GM12878 (cell line): ENCODE measurements at regions of chr6 and their contacts with region 1.

Region 1: GRCh38 chr6:12331956-12332749 is 42.0 kb downstream of the EDN1 start:
- DNase-seq: no peak
- ATAC-seq: no peak
- H3K4me3 ChIP-seq: no peak overlapping the region
- H3K27ac ChIP-seq: no peak overlapping the region
- H3K4me1 ChIP-seq: peaks cover 21% of the 10 kb centered on the region
- H3K27me3 ChIP-seq: no peaks in the 10 kb centered on the region
- CTCF ChIP-seq: no peak
- EP300 ChIP-seq: no peak
- POLR2A ChIP-seq: no peak
- RAD21 ChIP-seq: no peak

Region 2: GRCh38 chr6:12313992-12314805 is 18.0 kb before region 1 on chr6:
- CTCF ChIA-PET with region 1: interaction called, 14 read pairs
- POLR2A ChIA-PET with region 1: interaction called, 7 read pairs
- RAD21 ChIA-PET with region 1: interaction called, 3 read pairs
- SMC1A ChIA-PET with region 1: interaction called, 66 read pairs
- in situ Hi-C with region 1: no loop called
- intact Hi-C with region 1: no loop called
- DNase-seq: no peak
- ATAC-seq: no peak
- H3K4me3 ChIP-seq: no peak overlapping the region
- H3K27ac ChIP-seq: no peak overlapping the region
- H3K4me1 ChIP-seq: no peaks in the 10 kb centered on the region
- H3K27me3 ChIP-seq: no peaks in the 10 kb centered on the region
- CTCF ChIP-seq: no peak
- EP300 ChIP-seq: no peak
- POLR2A ChIP-seq: no peak
- RAD21 ChIP-seq: no peak

Region 3: DNA sequence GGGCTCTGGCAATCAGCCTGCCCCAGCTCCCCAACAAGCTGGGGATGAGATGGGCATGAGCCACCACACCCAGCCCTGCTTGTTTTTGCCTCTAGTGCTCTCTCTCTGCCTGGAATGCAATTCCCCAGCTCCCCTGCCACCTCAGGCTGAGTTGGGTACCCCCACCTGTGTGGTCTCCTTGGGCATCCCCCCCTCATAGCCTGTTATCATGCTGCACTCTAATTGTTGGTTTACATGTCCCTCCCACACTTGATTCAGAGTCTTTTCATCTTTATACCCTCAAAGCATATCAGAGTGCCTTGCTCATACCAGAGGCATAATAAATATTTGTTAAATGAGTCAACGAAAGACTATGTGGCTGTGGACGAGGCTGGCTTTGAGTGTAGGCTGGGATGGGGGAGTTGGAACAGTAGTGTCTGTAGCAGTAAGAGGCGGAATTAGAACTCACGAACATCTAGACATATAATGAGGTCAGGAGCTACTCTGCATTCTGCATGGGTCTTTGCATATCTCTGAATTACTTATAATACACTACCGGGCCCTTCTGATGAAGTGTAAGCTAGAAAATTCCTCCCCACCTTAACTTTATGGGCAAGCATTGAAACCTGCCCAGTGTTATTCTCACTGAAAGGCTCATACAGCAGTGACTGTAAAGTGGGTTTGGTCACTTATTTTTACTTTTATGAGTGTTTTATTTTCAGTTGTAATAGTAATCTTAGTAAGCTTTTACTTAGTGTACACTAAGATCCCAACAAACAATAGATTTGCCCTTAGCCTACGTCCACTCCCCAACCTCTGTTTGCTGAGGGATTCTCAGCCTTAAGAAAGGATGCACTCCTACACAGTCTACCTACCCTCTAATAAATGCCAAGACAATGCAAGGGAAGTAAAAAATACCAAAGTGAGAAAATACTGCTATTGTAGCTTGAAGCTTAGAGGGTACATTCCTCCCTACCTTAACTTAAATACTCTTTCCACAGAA is 16.7 kb after region 1 on chr6:
- CTCF ChIA-PET with region 1: interaction called, 81 read pairs
- POLR2A ChIA-PET with region 1: interaction called, 4 read pairs
- RAD21 ChIA-PET with region 1: interaction called, 152 read pairs
- SMC1A ChIA-PET with region 1: interaction called, 270 read pairs
- in situ Hi-C with region 1: no loop called
- intact Hi-C with region 1: loop called (anchors 1 kb)
- DNase-seq: no peak
- ATAC-seq: no peak; the same call in 1 of the 3 replicates
- H3K4me3 ChIP-seq: no peak overlapping the region
- H3K27ac ChIP-seq: no peak overlapping the region
- H3K4me1 ChIP-seq: no peaks in the 10 kb centered on the region
- H3K27me3 ChIP-seq: no peaks in the 10 kb centered on the region
- CTCF ChIP-seq: no peak
- EP300 ChIP-seq: no peak
- POLR2A ChIP-seq: no peak
- RAD21 ChIP-seq: no peak

Region 4: GRCh38 chr6:12363651-12364381 is 31.7 kb after region 1 on chr6:
- CTCF ChIA-PET with region 1: interaction called, 81 read pairs
- POLR2A ChIA-PET with region 1: interaction called, 23 read pairs
- RAD21 ChIA-PET with region 1: interaction called, 152 read pairs
- SMC1A ChIA-PET with region 1: interaction called, 270 read pairs
- in situ Hi-C with region 1: no loop called
- intact Hi-C with region 1: loop called (anchors 2 kb)
- DNase-seq: peak; percentile 95
- ATAC-seq: peak; percentile 88
- H3K4me3 ChIP-seq: no peak overlapping the region
- H3K27ac ChIP-seq: peak overlapping the region; percentile 70
- H3K4me1 ChIP-seq: peaks cover 38% of the 10 kb centered on the region
- H3K27me3 ChIP-seq: no peaks in the 10 kb centered on the region
- CTCF ChIP-seq: no peak
- EP300 ChIP-seq: peak; percentile 84 to 93
- POLR2A ChIP-seq: no peak
- RAD21 ChIP-seq: 0 out of 2 replicates have a peak, but pooled peaks have one; percentile 6

Region 5: GRCh38 chr6:12383448-12383847 is 51.3 kb after region 1 on chr6:
- CTCF ChIA-PET with region 1: interaction called, 10 read pairs
- POLR2A ChIA-PET with region 1: no interaction called
- RAD21 ChIA-PET with region 1: interaction called, 5 read pairs
- SMC1A ChIA-PET with region 1: interaction called, 10 read pairs
- in situ Hi-C with region 1: no loop called
- intact Hi-C with region 1: no loop called
- DNase-seq: peak; percentile 72
- ATAC-seq: peak; percentile 98
- H3K4me3 ChIP-seq: no peak overlapping the region
- H3K27ac ChIP-seq: no peak overlapping the region
- H3K4me1 ChIP-seq: peaks cover 11% of the 10 kb centered on the region
- H3K27me3 ChIP-seq: no peaks in the 10 kb centered on the region
- CTCF ChIP-seq: no peak
- EP300 ChIP-seq: peak; percentile 65 to 72; a peak in 2 of 4 replicates
- POLR2A ChIP-seq: no peak
- RAD21 ChIP-seq: no peak